H1 (cell line): ENCODE measurements at regions of chr1 and their contacts with region 1.

Region 1: DNA sequence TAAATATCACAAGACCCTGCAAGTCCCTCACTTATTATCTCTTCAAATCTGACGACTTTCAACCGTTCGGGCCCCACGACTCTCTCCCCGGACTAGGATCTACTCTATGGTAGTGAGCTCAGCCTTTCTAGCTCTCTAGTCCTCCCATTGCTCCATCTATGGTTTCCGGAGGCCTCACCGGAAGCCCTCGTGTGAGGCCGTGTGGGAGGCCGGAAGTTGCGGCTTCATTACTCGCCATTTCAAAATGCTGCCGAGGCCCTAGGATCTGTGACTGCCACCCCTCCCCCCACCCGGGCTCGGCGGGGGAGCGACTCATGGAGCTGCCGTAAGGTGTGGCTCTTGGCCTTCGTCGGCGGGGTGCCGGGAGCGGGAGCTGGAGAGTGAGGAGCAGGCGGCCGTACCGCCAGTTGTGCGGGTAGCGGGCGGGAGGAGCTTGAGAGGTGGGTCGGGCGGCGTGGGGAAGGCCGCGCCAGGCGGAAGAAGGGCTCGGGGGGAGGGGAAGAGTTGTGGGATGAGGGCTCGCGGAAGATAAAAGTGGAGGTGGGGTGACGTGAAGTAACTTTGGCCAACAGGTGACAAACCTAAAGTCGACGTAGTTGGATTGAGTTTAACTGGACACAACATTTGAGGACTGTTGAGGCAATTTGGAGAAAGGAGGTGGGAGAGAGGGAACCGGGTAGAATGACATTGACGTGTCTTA is at the start of gene MDM4:
- DNase-seq: peak; percentile 90 to 99
- H3K4me3 ChIP-seq: peak within 1 kb of the TSS; percentile 75 to 91 (median 84)
- H3K27ac ChIP-seq: peak within 1 kb of the TSS; percentile 97
- H3K4me1 ChIP-seq: no peaks in the 10 kb centered on the region; a peak in 1 of 7 replicates
- H3K27me3 ChIP-seq: no peaks in the 10 kb centered on the region
- CTCF ChIP-seq: no peak
- EP300 ChIP-seq: peak in 1 of 2 experiments; percentile 68; a peak in 2 of 3 replicates
- POLR2A ChIP-seq: peak in 1 of 2 experiments; percentile 75; a peak in 1 of 3 replicates
- RAD21 ChIP-seq: no peak
- total RNA-seq, gene MDM4: 81.7 and 84.9 TPM in 2 replicates

Region 2: DNA sequence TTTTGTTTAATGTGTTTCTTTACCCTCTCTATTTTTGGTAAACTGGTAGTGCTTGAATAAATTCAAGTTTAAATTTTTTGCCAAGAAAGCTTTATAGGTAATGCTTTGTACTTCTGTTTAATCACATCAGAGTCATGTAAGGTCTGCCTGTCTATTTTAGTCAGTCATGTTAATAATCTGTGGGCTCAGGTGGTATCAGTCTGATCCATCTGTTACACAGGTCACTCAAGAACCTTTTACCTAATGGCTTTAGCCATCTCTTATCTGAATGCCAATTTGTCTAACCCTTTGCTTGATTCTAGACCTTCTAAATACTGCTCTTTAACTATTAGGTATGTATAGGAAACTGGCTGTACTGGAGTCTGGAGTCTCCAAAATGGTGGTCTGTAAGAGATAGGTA is 16.5 kb after region 1 on chr1:
- CTCF ChIA-PET with region 1: no interaction called
- POLR2A ChIA-PET with region 1: interaction called, 54 read pairs
- DNase-seq: no peak
- H3K4me3 ChIP-seq: no peak overlapping the region
- H3K27ac ChIP-seq: no peak overlapping the region
- H3K4me1 ChIP-seq: no peaks in the 10 kb centered on the region
- H3K27me3 ChIP-seq: no peaks in the 10 kb centered on the region
- CTCF ChIP-seq: no peak
- EP300 ChIP-seq: no peak
- POLR2A ChIP-seq: no peak
- RAD21 ChIP-seq: no peak

Region 3: DNA sequence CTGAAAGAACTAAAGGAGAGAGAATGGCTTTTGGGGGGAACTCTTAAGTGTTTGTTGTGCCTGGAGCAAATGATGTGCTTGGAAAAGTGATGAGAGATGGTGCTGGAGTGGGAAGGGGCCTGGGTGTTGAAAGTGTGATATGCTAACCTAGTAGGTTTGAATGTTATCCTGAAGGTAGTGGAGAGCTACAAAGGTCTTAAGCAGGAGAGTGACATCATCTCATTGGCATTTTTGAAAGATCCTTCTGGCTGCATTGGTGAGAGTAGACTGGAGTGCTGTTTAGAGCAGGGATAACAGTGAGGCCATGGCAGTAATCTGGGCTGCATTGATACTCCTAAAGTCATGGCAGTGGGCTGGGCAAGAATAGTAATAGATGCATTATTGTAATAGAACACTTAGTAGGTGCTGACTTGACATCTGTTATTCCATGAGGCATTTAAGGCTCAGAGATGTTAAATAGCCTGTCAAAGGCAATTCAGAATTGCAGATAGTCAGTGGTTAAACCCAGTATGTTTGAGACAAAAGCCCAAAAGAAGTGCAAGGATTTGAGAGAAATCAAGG is 44.3 kb after region 1 on chr1:
- CTCF ChIA-PET with region 1: interaction called, 3 read pairs
- POLR2A ChIA-PET with region 1: interaction called, 18 read pairs
- DNase-seq: no peak
- H3K4me3 ChIP-seq: no peak overlapping the region
- H3K27ac ChIP-seq: no peak overlapping the region
- H3K4me1 ChIP-seq: peaks cover 0 to 13% (median 8%) of the 10 kb centered on the region in 4 experiments; a peak in 4 of 7 replicates
- H3K27me3 ChIP-seq: no peaks in the 10 kb centered on the region
- CTCF ChIP-seq: no peak
- EP300 ChIP-seq: no peak
- POLR2A ChIP-seq: no peak
- RAD21 ChIP-seq: no peak